ENCODE measurements at regions of chr1 and their contacts with region 1.

Region 1: DNA sequence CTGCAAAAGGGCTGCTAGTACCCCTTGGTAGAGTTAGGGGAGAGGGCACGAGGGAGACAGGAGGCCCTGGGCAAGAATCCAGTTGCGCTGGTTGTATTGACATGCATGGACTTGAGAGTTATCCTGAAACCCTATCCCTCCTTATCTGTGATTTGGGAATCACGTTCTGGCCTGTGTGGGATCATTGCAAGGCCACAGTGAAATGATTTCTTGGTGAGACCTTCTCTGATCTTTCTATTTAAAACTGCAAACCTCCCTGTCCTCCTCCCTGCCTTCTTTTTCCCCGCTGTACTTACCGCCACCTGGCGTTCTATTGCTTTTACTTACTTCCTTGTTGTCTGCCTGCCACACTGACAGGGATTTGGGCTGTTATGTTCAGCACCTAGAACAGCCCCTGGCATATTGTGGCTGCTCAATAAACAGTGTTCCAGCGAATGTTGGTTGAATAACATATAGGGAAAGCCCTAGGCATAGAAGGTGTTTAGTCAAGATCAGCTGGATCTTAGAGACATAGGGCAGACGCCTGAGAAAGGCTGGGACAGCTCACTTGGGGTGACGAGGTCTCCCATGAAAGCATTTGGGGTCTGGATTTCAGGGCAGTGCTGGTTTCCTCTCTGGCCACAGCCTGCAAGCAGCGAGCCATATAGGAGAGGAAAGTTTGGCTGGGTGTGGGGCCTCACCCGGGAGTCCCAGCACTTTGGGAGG is 25.6 kb downstream of the ALPL start:
- DNase-seq: no peak
- ATAC-seq: peak; percentile 95
- H3K4me3 ChIP-seq: no peak overlapping the region
- H3K27ac ChIP-seq: no peak overlapping the region
- H3K4me1 ChIP-seq: no peaks in the 10 kb centered on the region
- H3K27me3 ChIP-seq: no peaks in the 10 kb centered on the region; a peak in 1 of 4 replicates
- CTCF ChIP-seq: peak; percentile 56 to 76 (median 60); a peak in 5 of 6 replicates
- EP300 ChIP-seq: no peak
- POLR2A ChIP-seq: no peak
- RAD21 ChIP-seq: peak; percentile 68

Region 2: DNA sequence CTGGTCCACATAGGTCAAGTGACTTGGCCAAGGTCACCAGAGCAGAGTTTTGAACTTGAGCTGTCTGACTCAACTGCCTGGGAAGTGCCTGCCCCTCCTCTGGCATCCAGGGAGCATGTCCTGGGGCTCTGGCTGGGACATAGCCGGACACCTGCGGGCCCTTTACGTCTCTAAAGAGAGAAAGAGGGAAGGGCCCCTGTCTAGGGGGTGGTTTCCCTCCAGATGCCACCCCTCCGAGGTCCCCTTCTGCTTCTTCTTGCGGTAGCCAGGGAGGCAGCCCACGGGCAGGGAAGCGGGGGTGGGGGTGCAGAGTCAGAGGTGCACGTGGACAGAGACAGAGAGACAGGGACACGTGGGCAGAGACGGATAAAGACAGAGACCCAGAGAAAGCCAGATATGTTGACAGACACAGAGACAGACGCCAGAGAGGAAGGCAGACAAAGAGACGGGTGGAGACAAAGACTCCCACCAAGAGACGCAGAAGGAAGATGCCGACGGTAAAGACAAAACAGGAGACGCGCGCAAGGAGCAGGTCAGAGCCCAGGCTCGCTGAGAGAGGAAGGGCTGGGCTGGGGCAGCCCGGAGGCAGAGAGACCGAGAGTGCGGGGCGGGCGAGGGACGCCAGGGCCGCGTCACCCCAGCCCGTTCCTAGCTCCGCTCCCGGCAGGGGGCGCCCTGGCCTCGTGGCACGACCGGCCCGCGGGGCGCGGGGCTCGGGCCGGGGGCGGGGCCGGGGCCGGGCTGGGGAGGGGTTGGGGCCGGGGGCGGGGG is 26.1 kb before region 1 on chr1:
- CTCF ChIA-PET with region 1: interaction called, 327 read pairs
- POLR2A ChIA-PET with region 1: interaction called, 6 read pairs
- RAD21 ChIA-PET with region 1: interaction called, 109 read pairs
- SMC1A ChIA-PET with region 1: interaction called, 326 read pairs
- in situ Hi-C with region 1: no loop called
- intact Hi-C with region 1: loop called (anchors 1 kb)
- DNase-seq: no peak
- ATAC-seq: peak; percentile 96
- H3K4me3 ChIP-seq: no peak overlapping the region
- H3K27ac ChIP-seq: no peak overlapping the region
- H3K4me1 ChIP-seq: peaks cover 3% of the 10 kb centered on the region
- H3K27me3 ChIP-seq: peaks cover 2 to 16% of the 10 kb centered on the region in 2 experiments
- CTCF ChIP-seq: peak; percentile 36 to 67 (median 65); a peak in 5 of 6 replicates
- EP300 ChIP-seq: no peak
- POLR2A ChIP-seq: no peak
- RAD21 ChIP-seq: peak; percentile 61

Region 3: DNA sequence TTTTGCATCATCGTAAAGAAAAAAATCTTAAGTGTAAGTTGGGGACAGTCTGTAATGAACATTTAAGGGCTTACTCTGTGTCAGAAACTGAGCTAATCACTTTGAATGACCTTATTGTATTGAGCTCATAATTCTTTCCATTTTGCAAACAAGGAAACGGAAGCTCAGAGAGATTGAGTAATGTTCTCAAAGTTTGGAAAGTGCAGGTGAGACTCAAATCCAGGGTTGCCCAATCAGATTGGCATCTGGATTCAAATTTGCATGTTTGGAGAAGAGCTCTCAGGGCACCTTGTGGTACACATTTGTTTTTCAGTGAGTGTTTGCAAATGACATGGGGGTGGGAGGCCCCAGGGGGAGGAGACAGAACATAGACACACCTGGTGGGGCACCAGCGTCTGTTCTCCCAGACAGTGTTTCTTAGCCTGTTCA is 17.7 kb before region 1 on chr1:
- CTCF ChIA-PET with region 1: interaction called, 327 read pairs
- POLR2A ChIA-PET with region 1: interaction called, 6 read pairs
- RAD21 ChIA-PET with region 1: interaction called, 109 read pairs
- SMC1A ChIA-PET with region 1: interaction called, 326 read pairs
- in situ Hi-C with region 1: no loop called
- intact Hi-C with region 1: no loop called
- DNase-seq: no peak
- ATAC-seq: no peak
- H3K4me3 ChIP-seq: no peak overlapping the region
- H3K27ac ChIP-seq: no peak overlapping the region
- H3K4me1 ChIP-seq: peaks cover 22% of the 10 kb centered on the region
- H3K27me3 ChIP-seq: no peaks in the 10 kb centered on the region; a peak in 1 of 4 replicates
- CTCF ChIP-seq: no peak
- EP300 ChIP-seq: no peak
- POLR2A ChIP-seq: no peak
- RAD21 ChIP-seq: no peak

Region 4: DNA sequence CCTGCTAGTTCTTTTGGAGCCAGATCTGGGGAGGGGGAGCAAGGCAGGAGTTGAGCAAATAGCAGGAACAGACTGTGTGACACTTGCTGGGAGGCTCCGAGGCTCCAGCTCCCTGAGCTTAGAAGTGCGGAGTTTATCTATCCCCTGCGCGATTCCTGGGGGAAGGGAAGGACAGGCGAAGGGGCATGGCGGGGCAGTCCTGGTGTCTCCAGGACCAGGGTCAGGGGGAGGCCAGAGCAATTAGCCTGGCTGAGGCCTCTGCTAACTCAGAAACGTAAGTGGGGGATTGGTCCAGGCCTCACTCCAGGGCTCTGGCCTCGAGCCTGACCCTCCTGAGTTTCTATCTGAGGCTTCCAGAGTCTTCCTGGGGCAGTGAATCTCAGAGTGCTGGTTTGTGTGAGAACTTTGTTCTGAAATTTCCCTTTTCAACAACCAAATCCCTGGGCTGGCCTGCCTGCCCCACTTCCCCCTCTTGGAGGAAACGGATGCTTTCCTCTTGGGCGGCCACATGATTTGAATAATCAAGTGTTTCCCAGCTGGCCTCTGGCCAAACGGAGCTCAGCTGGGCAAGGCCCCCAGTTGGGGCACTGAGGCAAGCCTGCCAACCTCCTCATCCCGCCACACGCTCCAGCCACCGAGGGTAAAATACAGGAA is 10.0 kb before region 1 on chr1:
- CTCF ChIA-PET with region 1: interaction called, 327 read pairs
- POLR2A ChIA-PET with region 1: interaction called, 4 read pairs
- RAD21 ChIA-PET with region 1: interaction called, 7 read pairs
- SMC1A ChIA-PET with region 1: interaction called, 326 read pairs
- in situ Hi-C with region 1: no loop called
- intact Hi-C with region 1: no loop called
- DNase-seq: no peak
- ATAC-seq: peak; percentile 18
- H3K4me3 ChIP-seq: no peak overlapping the region
- H3K27ac ChIP-seq: no peak overlapping the region
- H3K4me1 ChIP-seq: peaks cover 7% of the 10 kb centered on the region
- H3K27me3 ChIP-seq: no peaks in the 10 kb centered on the region
- CTCF ChIP-seq: no peak
- EP300 ChIP-seq: no peak
- POLR2A ChIP-seq: no peak
- RAD21 ChIP-seq: no peak

Region 5: DNA sequence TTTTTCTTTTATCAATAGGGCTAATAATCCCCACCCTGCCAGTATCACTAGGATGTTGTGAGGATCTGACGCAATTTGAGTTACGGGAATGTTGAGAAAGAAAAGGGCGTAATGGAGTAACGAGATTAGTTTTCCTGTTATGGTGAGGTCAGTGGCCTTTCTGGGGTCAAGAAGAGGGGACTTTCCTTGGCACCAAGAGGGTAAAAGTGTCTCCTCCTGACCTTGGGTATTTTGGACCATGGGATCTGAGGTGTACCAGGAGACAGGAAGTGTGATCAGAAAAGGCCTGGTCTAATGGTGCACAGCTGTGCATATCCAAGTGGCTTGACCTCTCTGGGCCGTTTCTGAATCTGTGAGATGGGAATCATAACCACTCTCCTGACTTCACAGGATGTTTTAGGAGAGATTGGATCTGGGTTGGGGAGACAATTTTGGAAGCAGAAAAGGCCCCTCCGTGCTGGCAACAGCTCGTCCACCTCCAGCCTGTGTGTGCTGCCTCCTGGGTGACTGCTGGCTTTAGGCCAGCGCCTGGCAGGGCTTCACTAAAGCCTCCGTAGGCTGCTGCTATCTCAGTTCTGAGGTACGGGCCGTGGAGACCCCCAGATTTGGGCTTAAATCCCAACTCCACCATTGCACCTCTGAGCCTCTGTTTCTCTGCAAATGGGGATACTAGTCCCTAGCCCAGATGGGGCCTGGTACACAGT is 11.4 kb after region 1 on chr1:
- CTCF ChIA-PET with region 1: interaction called, 19 read pairs
- POLR2A ChIA-PET with region 1: no interaction called
- RAD21 ChIA-PET with region 1: no interaction called
- SMC1A ChIA-PET with region 1: no interaction called
- in situ Hi-C with region 1: no loop called
- intact Hi-C with region 1: no loop called
- DNase-seq: no peak
- ATAC-seq: no peak
- H3K4me3 ChIP-seq: no peak overlapping the region
- H3K27ac ChIP-seq: no peak overlapping the region
- H3K4me1 ChIP-seq: no peaks in the 10 kb centered on the region
- H3K27me3 ChIP-seq: no peaks in the 10 kb centered on the region; a peak in 1 of 4 replicates
- CTCF ChIP-seq: no peak
- EP300 ChIP-seq: no peak
- POLR2A ChIP-seq: no peak
- RAD21 ChIP-seq: no peak

Region 6: GRCh38 chr1:22592919-22593790 is 1058.3 kb after region 1 on chr1:
- CTCF ChIA-PET with region 1: no interaction called
- POLR2A ChIA-PET with region 1: no interaction called
- RAD21 ChIA-PET with region 1: no interaction called
- SMC1A ChIA-PET with region 1: no interaction called
- in situ Hi-C with region 1: no loop called
- intact Hi-C with region 1: no loop called
- DNase-seq: no peak
- ATAC-seq: no peak
- H3K4me3 ChIP-seq: no peak overlapping the region
- H3K27ac ChIP-seq: no peak overlapping the region
- H3K4me1 ChIP-seq: no peaks in the 10 kb centered on the region
- H3K27me3 ChIP-seq: no peaks in the 10 kb centered on the region; a peak in 2 of 4 replicates
- CTCF ChIP-seq: no peak
- EP300 ChIP-seq: no peak
- POLR2A ChIP-seq: no peak
- RAD21 ChIP-seq: no peak